Left ventricle myocardium superior (tissue), 1 donor: ENCODE measurements at regions of chr13 and their contacts with region 1.

Region 1: DNA sequence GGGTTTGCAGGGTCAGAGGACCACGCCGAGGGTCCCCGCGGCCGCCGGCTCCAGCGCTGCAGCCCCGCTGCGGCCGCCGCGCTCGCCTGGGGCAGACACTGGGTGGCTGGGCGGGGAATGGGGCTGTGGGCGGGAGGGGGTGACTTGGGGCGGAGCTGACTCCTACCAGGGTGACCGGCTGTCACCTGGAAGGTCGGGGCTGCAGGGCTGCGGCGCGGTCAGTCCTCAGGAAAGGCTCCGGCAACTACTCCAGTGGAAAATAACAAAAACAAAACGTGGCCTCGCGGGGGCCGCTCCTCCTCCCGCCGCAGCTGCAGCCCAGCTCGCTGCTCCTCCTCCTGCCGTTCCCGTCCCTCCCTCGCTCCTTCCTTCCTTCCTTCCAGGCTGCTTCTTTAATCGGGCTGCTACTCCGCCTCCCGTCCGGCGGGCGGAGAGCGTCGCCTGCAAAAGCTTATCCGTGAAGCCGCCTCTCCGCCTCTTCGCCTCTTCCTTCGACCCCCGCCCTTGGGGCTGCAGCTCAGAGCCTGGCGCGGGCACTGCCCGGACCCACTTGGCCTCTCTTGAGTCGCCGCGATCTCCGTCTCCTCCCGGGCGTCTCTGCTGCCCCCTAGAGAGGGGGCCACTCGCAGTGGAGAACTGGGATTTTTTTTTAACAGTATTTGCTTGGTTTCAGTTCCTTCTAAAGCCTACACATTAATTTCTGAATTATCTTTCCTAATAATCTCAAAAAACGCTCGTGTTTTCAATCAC is at the start of gene TBC1D4:
- DNase-seq: peak; percentile 91
- ATAC-seq: peak; percentile 90
- total RNA-seq, gene TBC1D4: 116 TPM

Region 2: DNA sequence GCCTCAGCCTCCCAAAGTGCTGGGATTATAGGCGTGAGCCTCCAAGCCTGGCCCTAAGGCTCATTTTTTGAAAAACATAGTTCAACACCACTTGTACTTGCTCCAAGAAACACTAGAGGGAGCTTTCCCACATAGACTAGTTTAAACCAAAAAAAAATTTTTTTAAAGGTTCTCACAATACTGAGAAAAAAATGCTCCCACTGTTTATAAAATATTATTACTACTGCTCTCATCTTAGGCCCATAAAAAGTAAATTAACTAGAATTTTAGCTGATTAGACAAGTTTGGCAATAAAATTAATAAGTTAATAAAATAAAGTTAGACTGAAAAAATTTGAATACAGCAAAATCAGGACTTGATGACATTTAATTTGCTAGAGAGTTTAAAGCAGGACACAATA is 109.7 kb before region 1 on chr13:
- intact Hi-C with region 1: loop called (anchors 5 kb)
- DNase-seq: no peak
- ATAC-seq: peak; percentile 41